ENCODE measurements at regions of chr1 and their contacts with region 1.

Region 1: DNA sequence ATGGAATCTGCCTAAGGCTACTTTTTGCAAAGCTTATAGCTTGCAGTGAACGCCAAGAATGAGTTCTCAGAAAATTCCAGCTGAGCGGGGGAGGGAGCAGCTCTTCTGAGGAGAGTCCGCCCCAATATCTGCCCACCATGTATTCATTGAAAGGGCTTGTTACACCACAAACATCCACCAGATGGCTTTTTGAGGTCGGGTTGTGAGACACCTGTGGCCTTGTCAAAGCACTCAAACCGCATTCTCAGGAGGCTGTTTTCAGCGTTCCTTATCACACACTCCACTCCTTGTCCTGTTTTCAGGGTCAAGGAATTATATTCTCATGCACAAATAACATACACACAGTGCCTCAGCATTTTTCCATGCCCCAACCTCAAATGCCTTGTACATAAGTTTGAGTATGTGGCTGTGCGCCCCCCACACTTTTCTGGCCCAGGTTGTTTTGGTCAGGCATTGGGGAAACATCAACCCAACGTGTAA is 3.9 kb upstream of the C4BPB start:
- DNase-seq: peak in 1 of 2 donors; percentile 38
- ATAC-seq: peak; percentile 44 to 74
- H3K4me3 ChIP-seq: no peak overlapping the region
- H3K27ac ChIP-seq: no peak overlapping the region
- H3K4me1 ChIP-seq: peaks cover 2 to 4% of the 10 kb centered on the region in 2 donors
- H3K27me3 ChIP-seq: no peaks in the 10 kb centered on the region
- CTCF ChIP-seq: peak; percentile 44 to 63 (median 53)
- POLR2A ChIP-seq: no peak

Region 2: DNA sequence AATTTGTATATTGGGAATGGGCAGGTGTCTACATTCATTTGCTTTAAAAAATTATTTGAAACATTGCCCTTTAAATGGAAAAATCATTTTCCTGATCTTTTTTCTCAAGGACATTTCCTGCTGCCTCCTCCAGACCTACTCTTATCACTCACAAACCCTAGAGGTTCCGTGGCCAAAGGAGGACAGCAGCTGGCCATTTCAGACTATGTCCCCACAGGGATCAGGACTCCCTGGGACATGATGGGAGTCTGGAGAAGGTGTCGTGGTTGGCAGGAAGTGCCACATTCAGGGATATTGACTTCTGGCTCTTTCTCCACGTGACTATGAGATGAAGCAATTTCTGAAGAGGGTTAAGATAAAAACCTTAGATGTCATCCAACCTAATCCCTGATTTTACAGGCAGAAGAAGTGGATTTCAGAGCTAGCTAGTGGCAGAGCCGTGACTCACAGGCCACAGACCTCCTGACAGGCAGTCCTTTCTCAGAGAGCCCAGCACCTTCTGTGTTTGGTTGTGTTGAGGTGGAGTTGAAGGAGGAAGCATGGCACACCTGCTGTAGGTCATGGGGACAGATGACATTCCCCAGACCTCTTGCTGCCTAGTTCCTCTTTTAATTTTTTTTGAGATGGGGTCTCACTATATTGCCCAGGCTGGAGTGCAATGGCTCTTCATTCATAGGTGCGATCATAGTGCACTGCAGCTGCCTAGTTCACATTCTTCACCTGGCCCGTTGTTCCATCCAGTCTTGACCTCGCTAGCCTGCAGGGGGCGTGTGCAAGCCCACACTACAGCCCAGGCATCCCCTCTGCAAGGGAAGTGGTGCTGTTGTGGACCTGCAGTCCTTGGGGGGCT is 287.0 kb before region 1 on chr1:
- in situ Hi-C with region 1: no loop called
- intact Hi-C with region 1: no loop called
- DNase-seq: no peak
- ATAC-seq: no peak
- H3K4me3 ChIP-seq: no peak overlapping the region
- H3K27ac ChIP-seq: no peak overlapping the region
- H3K4me1 ChIP-seq: no peaks in the 10 kb centered on the region
- H3K27me3 ChIP-seq: no peaks in the 10 kb centered on the region
- CTCF ChIP-seq: no peak
- POLR2A ChIP-seq: no peak

Region 3: GRCh38 chr1:207032528-207033017 is 52.2 kb before region 1 on chr1 and contains the start of gene C1orf116:
- in situ Hi-C with region 1: no loop called
- intact Hi-C with region 1: loop called (anchors 10 kb)
- DNase-seq: no peak
- ATAC-seq: no peak
- H3K4me3 ChIP-seq: no peak within 1 kb of the TSS
- H3K27ac ChIP-seq: no peak within 1 kb of the TSS
- H3K4me1 ChIP-seq: peaks cover 7 to 15% of the 10 kb centered on the region in 2 donors
- H3K27me3 ChIP-seq: no peaks in the 10 kb centered on the region
- CTCF ChIP-seq: no peak
- POLR2A ChIP-seq: no peak
- total RNA-seq, gene C1orf116: 0.46 to 1.1 (median 0.65) TPM

Region 4: DNA sequence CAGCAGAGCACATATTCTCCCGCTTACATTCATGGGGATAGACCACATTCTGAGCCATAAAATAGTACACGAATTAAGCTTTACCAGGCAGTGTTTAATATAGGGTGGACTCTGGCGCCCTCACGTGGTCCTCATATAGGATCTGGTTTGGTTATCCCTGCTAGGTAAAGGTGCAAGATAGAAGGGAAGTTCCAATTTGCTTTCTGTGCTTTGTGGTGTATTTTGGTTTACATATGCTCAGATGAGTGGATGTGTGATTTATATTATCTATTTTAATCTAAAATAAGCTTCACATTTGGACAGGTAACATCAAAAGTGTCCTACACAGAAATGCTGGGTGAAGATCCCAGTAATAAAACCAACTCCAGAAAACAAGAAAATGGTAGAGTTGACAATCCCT is 414.8 kb after region 1 on chr1:
- in situ Hi-C with region 1: no loop called
- intact Hi-C with region 1: loop called (anchors 2 kb)
- DNase-seq: peak; percentile 14 to 39
- ATAC-seq: peak in 1 of 2 donors; percentile 44
- H3K4me3 ChIP-seq: no peak overlapping the region
- H3K27ac ChIP-seq: no peak overlapping the region
- H3K4me1 ChIP-seq: peaks cover 0 to 4% of the 10 kb centered on the region in 2 donors
- H3K27me3 ChIP-seq: peaks cover 30 to 34% (median 32%) of the 10 kb centered on the region in 3 donors
- CTCF ChIP-seq: peak; percentile 38 to 67 (median 57)
- POLR2A ChIP-seq: no peak